H1 (cell line): ENCODE measurements at regions of chr14 and their contacts with region 1.

Region 1: GRCh38 chr14:69580009-69580577 is 5.4 kb upstream of the CCDC177 start:
- DNase-seq: peak in 1 of 2 experiments; percentile 76
- H3K4me3 ChIP-seq: no peak overlapping the region
- H3K27ac ChIP-seq: no peak overlapping the region; the same call in 1 of the 2 replicates
- H3K4me1 ChIP-seq: peaks cover 0 to 4% (median 0%) of the 10 kb centered on the region in 4 experiments; a peak in 1 of 7 replicates
- H3K27me3 ChIP-seq: no peaks in the 10 kb centered on the region; a peak in 2 of 7 replicates
- CTCF ChIP-seq: peak; percentile 90 to 95 (median 92)
- EP300 ChIP-seq: no peak
- POLR2A ChIP-seq: no peak
- RAD21 ChIP-seq: peak; percentile 70 to 76

Region 2: GRCh38 chr14:69543341-69544249 is 36.5 kb before region 1 on chr14:
- CTCF ChIA-PET with region 1: interaction called, 96 read pairs
- POLR2A ChIA-PET with region 1: interaction called, 8 read pairs
- DNase-seq: no peak
- H3K4me3 ChIP-seq: no peak overlapping the region
- H3K27ac ChIP-seq: no peak overlapping the region
- H3K4me1 ChIP-seq: peaks cover 0 to 6% (median under 1%) of the 10 kb centered on the region in 4 experiments; a peak in 4 of 7 replicates
- H3K27me3 ChIP-seq: no peaks in the 10 kb centered on the region; a peak in 3 of 7 replicates
- CTCF ChIP-seq: no peak
- EP300 ChIP-seq: no peak
- POLR2A ChIP-seq: no peak
- RAD21 ChIP-seq: no peak

Region 3: GRCh38 chr14:69593018-69593677 is 13.1 kb after region 1 on chr14:
- CTCF ChIA-PET with region 1: interaction called, 33 read pairs
- POLR2A ChIA-PET with region 1: no interaction called
- DNase-seq: no peak
- H3K4me3 ChIP-seq: no peak overlapping the region
- H3K27ac ChIP-seq: no peak overlapping the region
- H3K4me1 ChIP-seq: no peaks in the 10 kb centered on the region
- H3K27me3 ChIP-seq: no peaks in the 10 kb centered on the region
- CTCF ChIP-seq: no peak
- EP300 ChIP-seq: no peak
- POLR2A ChIP-seq: no peak
- RAD21 ChIP-seq: no peak

Region 4: DNA sequence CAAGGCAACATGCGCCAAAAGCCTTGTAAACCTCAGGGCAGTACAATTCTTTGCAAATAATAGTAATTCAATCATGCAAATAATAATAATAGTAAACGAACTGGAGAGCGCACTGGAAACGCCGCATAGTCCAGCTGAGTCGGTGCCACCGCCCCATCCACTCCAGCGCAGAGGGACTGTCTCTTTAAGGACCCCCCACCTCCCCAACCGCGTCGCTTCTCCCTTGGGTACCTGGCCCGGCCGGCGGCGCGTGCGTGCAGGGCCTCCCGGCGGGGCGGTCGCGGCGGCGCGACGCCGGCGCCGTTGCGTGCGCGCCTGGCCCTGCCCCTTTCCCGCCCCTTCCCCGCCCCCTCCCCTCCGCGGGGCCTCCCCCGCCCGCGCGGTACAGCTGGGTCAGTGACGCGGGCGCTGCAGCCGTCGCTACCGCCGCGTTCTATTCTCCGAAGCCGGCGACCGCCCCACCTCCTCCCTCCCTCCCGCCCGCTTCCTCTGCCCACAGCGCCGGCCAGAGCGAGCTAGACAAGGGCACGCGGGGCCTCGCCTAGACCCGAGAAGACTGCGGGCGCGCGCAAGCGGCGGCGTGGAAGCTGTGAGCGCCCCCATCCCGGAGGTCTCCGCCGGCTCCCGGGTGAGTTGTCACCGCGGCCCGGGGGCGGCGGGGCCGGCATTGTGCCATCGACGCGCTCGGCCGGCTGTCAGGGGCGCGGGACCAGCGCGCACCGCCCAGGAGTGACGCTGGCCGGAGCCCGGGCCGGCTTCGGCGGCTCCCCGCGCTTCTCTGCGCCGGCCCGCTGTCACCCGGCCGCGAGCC is 31.3 kb after region 1 on chr14 and contains the start of gene SUSD6:
- CTCF ChIA-PET with region 1: interaction called, 20 read pairs
- POLR2A ChIA-PET with region 1: no interaction called
- DNase-seq: peak; percentile 29 to 77
- H3K4me3 ChIP-seq: peak within 1 kb of the TSS; percentile 59 to 80 (median 62)
- H3K27ac ChIP-seq: no peak within 1 kb of the TSS
- H3K4me1 ChIP-seq: peaks cover 2 to 15% (median 5%) of the 10 kb centered on the region in 4 experiments; a peak in 5 of 7 replicates
- H3K27me3 ChIP-seq: peaks cover 0 to 3% (median 0%) of the 10 kb centered on the region in 4 experiments; a peak in 1 of 7 replicates
- CTCF ChIP-seq: no peak; a peak in 1 of 4 replicates
- EP300 ChIP-seq: no peak
- POLR2A ChIP-seq: no peak
- RAD21 ChIP-seq: no peak; a peak in 1 of 4 replicates
- total RNA-seq, gene SUSD6: 3.8 and 5.1 TPM in 2 replicates

Region 5: GRCh38 chr14:69726761-69727511 is 146.8 kb after region 1 on chr14:
- CTCF ChIA-PET with region 1: interaction called, 47 read pairs
- POLR2A ChIA-PET with region 1: no interaction called
- DNase-seq: peak in 1 of 2 experiments; percentile 93
- H3K4me3 ChIP-seq: peak overlapping the region in 3 of 4 experiments; percentile 16 to 52 (median 34); a peak in 5 of 8 replicates
- H3K27ac ChIP-seq: no peak overlapping the region
- H3K4me1 ChIP-seq: no peaks in the 10 kb centered on the region; a peak in 3 of 7 replicates
- H3K27me3 ChIP-seq: peaks cover 0 to 11% (median 9%) of the 10 kb centered on the region in 4 experiments; a peak in 5 of 7 replicates
- CTCF ChIP-seq: peak; percentile 91 to 97 (median 92)
- EP300 ChIP-seq: 0 out of 3 replicates have a peak, but pooled peaks of 1 of the 2 experiments have one; percentile 35
- POLR2A ChIP-seq: no peak
- RAD21 ChIP-seq: peak; percentile 94 to 99